Common myeloid progenitor, CD34-positive (primary cell): ENCODE measurements at regions of chr3 and their contacts with region 1.

Region 1: DNA sequence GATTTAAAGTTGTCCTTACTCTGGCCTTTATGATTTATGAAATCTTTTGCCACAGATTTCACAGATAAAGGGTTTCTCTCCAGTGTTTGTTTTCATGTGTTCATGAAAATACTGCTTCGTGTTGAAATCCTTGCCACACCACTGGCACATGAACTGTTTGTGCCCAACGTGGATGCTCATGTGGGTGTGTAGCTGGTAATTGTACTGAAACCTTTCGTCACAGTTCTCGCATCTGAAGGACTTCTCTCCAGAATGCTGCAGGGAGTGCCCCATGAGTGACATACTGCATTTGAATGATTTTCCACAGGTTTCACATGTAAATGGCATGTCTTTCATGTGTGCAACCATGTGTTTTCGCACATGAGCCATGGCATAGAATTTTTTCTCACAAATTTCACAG is 111.9 kb downstream of the DOCK3 start:
- DNase-seq: no peak
- H3K4me3 ChIP-seq: no peak overlapping the region
- H3K27ac ChIP-seq: no peak overlapping the region
- H3K4me1 ChIP-seq: no peaks in the 10 kb centered on the region
- H3K27me3 ChIP-seq: no peaks in the 10 kb centered on the region

Region 2: GRCh38 chr3:50759015-50759414 is 27.6 kb before region 1 on chr3:
- CTCF ChIA-PET with region 1: no interaction called
- POLR2A ChIA-PET with region 1: interaction called, 11 read pairs
- DNase-seq: no peak
- H3K4me3 ChIP-seq: no peak overlapping the region
- H3K27ac ChIP-seq: no peak overlapping the region
- H3K4me1 ChIP-seq: no peaks in the 10 kb centered on the region
- H3K27me3 ChIP-seq: peaks cover 0 to 3% (median 0%) of the 10 kb centered on the region in 5 experiments